ENCODE measurements at regions of chr12 and their contacts with region 1.

Region 1: GRCh38 chr12:120463712-120464111 is 5.8 kb downstream of the SRSF9 start:
- DNase-seq: no peak
- H3K4me3 ChIP-seq: no peak overlapping the region
- H3K27ac ChIP-seq: no peak overlapping the region
- H3K4me1 ChIP-seq: no peaks in the 10 kb centered on the region
- H3K27me3 ChIP-seq: no peaks in the 10 kb centered on the region
- CTCF ChIP-seq: no peak
- EP300 ChIP-seq: no peak
- POLR2A ChIP-seq: peak in 1 of 2 experiments; percentile 49; a peak in 1 of 3 replicates
- RAD21 ChIP-seq: no peak

Region 2: GRCh38 chr12:120481022-120481767 is 17.5 kb after region 1 on chr12:
- CTCF ChIA-PET with region 1: interaction called, 5 read pairs
- POLR2A ChIA-PET with region 1: interaction called, 365 read pairs
- DNase-seq: no peak
- H3K4me3 ChIP-seq: no peak overlapping the region
- H3K27ac ChIP-seq: no peak overlapping the region
- H3K4me1 ChIP-seq: peaks cover 0 to 5% (median 0%) of the 10 kb centered on the region in 4 experiments; a peak in 1 of 7 replicates
- H3K27me3 ChIP-seq: no peaks in the 10 kb centered on the region
- CTCF ChIP-seq: no peak
- EP300 ChIP-seq: no peak
- POLR2A ChIP-seq: no peak
- RAD21 ChIP-seq: no peak

Measured in H1 (cell line).